ENCODE measurements at regions of chr20 and their contacts with region 1.

Region 1: GRCh38 chr20:12891643-12892042 is 117.1 kb upstream of the SPTLC3 start:
- DNase-seq: no peak
- H3K4me3 ChIP-seq: no peak overlapping the region
- H3K27ac ChIP-seq: no peak overlapping the region
- H3K4me1 ChIP-seq: peaks cover 1% of the 10 kb centered on the region
- H3K27me3 ChIP-seq: no peaks in the 10 kb centered on the region
- CTCF ChIP-seq: no peak
- EP300 ChIP-seq: no peak
- POLR2A ChIP-seq: no peak

Region 2: GRCh38 chr20:12838261-12838866 is 53.3 kb before region 1 on chr20:
- intact Hi-C with region 1: loop called in 1 of 4 experiments (anchors 10 kb)
- DNase-seq: no peak
- H3K4me3 ChIP-seq: no peak overlapping the region
- H3K27ac ChIP-seq: no peak overlapping the region
- H3K4me1 ChIP-seq: no peaks in the 10 kb centered on the region
- H3K27me3 ChIP-seq: no peaks in the 10 kb centered on the region
- CTCF ChIP-seq: no peak
- EP300 ChIP-seq: no peak
- POLR2A ChIP-seq: no peak

Region 3: DNA sequence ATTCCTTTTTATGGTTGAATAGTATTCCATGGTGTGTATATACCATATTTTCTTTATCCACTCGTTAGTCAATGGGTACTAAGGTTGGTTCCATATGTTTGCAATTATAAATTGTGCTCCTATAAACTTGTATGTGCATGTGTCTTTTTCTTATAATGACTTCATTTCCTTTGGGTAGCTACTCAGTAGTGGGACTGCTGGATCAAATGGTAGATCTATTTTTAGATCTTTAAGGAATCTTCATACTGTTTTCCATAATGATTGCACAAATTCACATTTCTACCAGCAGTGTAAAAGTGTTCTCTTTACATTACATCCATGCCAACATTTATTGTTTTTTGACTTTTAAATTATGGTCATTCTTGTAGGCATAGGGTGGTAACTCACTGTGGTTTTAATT is 582.8 kb after region 1 on chr20:
- intact Hi-C with region 1: no loop called
- DNase-seq: no peak
- H3K4me3 ChIP-seq: no peak overlapping the region
- H3K27ac ChIP-seq: no peak overlapping the region
- H3K4me1 ChIP-seq: no peaks in the 10 kb centered on the region
- H3K27me3 ChIP-seq: no peaks in the 10 kb centered on the region
- CTCF ChIP-seq: no peak
- EP300 ChIP-seq: no peak
- POLR2A ChIP-seq: no peak

Measured in ovary (tissue), 10 donors.